Endothelial cell of umbilical vein (primary cell): ENCODE measurements at regions of chr11 and their contacts with region 1.

Region 1: GRCh38 chr11:76152086-76152681 is 54.1 kb downstream of the WNT11 start:
- DNase-seq: peak; percentile 77
- H3K4me3 ChIP-seq: peak overlapping the region in 2 of 3 experiments; percentile 25 to 27
- H3K27ac ChIP-seq: no peak overlapping the region
- H3K4me1 ChIP-seq: no peaks in the 10 kb centered on the region
- H3K27me3 ChIP-seq: no peaks in the 10 kb centered on the region
- CTCF ChIP-seq: peak; percentile 95 to 99
- POLR2A ChIP-seq: no peak

Region 2: GRCh38 chr11:75562048-75562835 is 589.9 kb before region 1 on chr11 and contains the start of gene SERPINH1:
- CTCF ChIA-PET with region 1: no interaction called
- POLR2A ChIA-PET with region 1: no interaction called
- dilution Hi-C with region 1: no loop called
- intact Hi-C with region 1: no loop called
- DNase-seq: peak; percentile 71
- H3K4me3 ChIP-seq: peak within 1 kb of the TSS; percentile 50 to 84 (median 66)
- H3K27ac ChIP-seq: peak within 1 kb of the TSS; percentile 92
- H3K4me1 ChIP-seq: peaks cover 54% of the 10 kb centered on the region
- H3K27me3 ChIP-seq: no peaks in the 10 kb centered on the region
- CTCF ChIP-seq: no peak
- POLR2A ChIP-seq: peak; percentile 86
- total RNA-seq, gene SERPINH1: 384 and 409 TPM in 2 replicates

Region 3: DNA sequence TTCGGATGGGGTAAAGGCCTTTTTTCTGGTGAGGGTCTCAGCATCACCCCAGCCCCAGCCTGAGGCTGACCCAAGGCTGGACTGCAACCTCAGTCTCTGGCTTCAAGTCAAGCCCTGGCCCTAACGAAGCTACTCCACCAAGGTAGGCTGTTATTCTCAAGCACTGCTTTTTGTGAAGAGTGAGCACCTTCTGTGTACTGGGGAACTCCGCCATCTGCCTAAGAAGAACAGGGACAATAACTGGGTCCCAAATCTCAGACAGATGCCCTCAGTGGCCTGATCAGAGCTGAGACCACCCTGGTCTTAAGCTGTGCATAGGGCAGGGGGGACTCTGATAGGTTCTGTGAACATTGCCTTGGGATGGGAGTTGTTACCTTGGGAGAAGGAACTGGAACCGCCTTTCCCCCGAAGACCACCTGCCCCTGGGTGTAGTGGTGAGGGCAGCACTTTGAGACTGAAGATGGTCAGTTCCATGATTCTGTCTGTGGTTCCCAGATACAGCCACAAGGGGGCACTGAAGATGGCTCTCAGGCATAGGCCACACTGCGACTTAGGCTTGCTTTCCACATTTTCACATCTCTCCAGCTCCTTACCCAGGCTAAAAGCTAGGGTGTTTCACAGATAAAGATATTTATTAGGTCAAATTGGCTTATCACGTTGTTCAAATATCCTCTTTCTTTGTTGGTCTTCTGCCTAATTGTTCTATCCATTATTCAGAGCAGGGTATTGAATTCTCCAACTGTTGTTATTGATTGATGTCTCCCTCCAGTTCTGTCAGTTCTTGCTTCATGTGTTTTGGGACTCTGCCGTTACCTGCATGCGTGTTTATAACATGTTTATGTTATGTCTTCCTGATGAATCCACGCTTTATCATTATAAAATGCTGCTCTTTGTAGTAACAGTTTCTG is 349.0 kb before region 1 on chr11:
- CTCF ChIA-PET with region 1: interaction called, 43 read pairs
- POLR2A ChIA-PET with region 1: no interaction called
- dilution Hi-C with region 1: no loop called
- intact Hi-C with region 1: loop called (anchors 1 kb)
- DNase-seq: peak; percentile 84
- H3K4me3 ChIP-seq: no peak overlapping the region
- H3K27ac ChIP-seq: no peak overlapping the region
- H3K4me1 ChIP-seq: no peaks in the 10 kb centered on the region
- H3K27me3 ChIP-seq: no peaks in the 10 kb centered on the region
- CTCF ChIP-seq: peak; percentile 87 to 90
- POLR2A ChIP-seq: no peak

Region 4: DNA sequence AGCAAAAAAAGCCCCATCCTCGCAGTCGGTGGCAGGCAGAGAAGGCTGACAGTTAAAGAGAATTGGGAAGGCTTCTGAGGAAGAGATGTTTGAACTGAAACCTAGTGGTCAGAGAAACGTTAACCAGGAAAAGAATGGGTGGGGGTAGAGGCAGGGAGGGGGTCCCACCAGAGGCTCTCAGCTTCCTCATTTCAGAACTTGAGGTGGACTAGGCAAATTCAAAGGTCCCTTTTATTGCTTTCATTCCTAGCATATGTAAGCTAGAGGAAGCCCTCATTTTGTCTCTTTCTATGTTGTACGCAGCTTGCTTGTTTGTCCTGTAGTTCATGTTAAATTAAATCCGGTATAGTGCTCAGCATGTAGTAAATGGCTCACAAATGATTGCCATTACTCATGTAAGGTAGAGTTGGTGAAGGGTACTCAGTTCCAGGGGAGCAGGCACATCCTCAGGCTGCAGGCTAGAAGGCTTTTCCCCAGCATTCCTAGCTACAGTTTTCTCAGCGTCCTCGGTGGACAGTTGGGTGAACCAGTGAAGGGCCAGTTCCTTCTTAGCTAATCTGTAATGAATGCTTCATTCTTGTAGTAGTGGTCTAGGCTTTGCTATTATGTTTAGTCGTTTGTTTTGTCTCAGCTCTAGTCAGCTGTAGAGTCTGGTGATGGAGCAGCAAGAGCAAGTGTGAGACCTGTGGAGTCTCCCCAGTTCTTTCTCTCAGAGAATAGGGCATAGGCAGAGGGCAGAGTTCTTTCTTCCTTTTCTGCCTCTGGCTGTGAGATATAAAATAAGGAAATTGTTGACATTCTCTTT is 278.6 kb before region 1 on chr11:
- CTCF ChIA-PET with region 1: interaction called, 20 read pairs
- POLR2A ChIA-PET with region 1: no interaction called
- dilution Hi-C with region 1: no loop called
- intact Hi-C with region 1: no loop called
- DNase-seq: peak; percentile 19
- H3K4me3 ChIP-seq: no peak overlapping the region
- H3K27ac ChIP-seq: no peak overlapping the region
- H3K4me1 ChIP-seq: peaks cover 12% of the 10 kb centered on the region
- H3K27me3 ChIP-seq: no peaks in the 10 kb centered on the region
- CTCF ChIP-seq: no peak
- POLR2A ChIP-seq: no peak

Region 5: GRCh38 chr11:75946531-75947530 is 205.4 kb before region 1 on chr11:
- CTCF ChIA-PET with region 1: interaction called, 11 read pairs
- POLR2A ChIA-PET with region 1: no interaction called
- dilution Hi-C with region 1: no loop called
- intact Hi-C with region 1: no loop called
- DNase-seq: peak; percentile 22
- H3K4me3 ChIP-seq: no peak overlapping the region
- H3K27ac ChIP-seq: peak overlapping the region; percentile 16
- H3K4me1 ChIP-seq: peaks cover 18% of the 10 kb centered on the region
- H3K27me3 ChIP-seq: no peaks in the 10 kb centered on the region
- CTCF ChIP-seq: no peak
- POLR2A ChIP-seq: no peak

Region 6: DNA sequence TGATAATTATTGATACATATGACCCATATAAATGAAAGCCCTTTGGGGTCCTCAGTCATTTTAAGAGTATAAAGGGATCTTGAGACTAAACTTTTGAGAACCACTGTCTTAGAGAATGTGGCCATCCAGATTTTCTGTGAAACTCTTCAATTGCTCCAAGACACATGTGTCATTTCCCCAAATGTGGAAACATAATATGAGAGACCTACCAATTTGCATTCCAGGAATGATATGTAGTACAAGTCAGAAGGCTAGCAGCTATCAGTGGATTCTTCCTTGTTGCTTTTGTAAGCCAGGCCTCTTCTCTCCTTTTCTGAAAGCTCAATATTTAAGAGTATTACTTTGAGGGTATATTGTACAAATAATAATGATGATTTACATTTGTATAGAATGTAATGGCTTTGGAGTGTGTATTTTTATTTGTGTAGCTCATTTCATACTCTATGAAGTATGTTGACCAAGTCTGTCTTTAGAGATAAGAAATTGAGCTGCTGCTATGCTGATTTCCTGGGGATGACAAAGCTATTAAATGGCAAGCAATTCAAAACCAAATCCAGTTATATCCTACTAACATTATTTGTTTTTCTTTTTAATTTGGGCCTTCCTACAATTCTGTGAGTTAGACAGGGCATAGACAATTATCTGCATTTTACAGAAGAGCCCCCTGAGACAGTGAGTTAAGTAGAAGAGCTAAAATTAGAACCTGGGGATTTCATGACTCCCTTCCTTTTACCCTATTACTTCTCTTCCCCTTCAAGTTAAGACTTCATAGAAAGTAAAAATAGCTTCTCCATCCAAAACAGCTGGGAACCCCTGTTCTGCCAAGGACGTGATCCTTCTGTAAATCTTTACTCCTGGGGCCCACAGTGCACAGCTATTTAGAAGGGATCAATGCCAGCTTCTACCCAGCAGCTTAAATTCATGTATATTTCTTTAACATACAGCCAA is 77.8 kb before region 1 on chr11:
- CTCF ChIA-PET with region 1: interaction called, 19 read pairs
- POLR2A ChIA-PET with region 1: no interaction called
- dilution Hi-C with region 1: no loop called
- intact Hi-C with region 1: no loop called
- DNase-seq: peak; percentile 75
- H3K4me3 ChIP-seq: no peak overlapping the region
- H3K27ac ChIP-seq: peak overlapping the region; percentile 44
- H3K4me1 ChIP-seq: peaks cover 35% of the 10 kb centered on the region
- H3K27me3 ChIP-seq: no peaks in the 10 kb centered on the region
- CTCF ChIP-seq: no peak
- POLR2A ChIP-seq: no peak

Region 7: DNA sequence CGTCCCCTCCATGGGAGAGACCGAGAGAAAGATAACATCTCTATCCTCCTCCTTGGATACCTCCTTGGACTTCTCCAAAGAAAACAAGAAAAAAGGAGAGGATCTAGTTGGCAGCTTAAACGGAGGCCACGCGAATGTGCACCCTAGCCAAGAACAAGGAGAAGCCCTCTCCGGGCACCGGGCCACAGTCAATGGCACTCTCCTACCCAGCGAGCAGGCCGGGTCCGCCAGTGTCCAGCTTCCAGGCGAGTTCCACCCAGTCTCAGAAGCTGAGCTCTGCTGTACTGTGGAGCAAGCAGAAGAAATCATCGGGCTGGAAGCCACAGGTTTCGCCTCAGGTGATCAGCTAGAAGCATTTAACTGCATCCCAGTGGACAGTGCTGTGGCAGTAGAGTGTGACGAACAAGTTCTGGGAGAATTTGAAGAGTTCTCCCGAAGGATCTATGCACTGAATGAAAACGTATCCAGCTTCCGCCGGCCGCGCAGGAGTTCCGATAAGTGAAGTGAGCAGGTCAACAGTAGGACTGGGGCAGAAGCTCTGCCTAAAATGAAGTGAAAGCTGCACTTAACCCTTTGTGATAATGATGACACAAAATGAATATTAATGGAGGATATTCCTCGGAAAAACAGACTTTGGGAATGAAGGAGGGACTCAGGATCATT is 11.1 kb before region 1 on chr11:
- CTCF ChIA-PET with region 1: interaction called, 21 read pairs
- POLR2A ChIA-PET with region 1: no interaction called
- dilution Hi-C with region 1: no loop called
- intact Hi-C with region 1: no loop called
- DNase-seq: no peak
- H3K4me3 ChIP-seq: no peak overlapping the region
- H3K27ac ChIP-seq: no peak overlapping the region
- H3K4me1 ChIP-seq: no peaks in the 10 kb centered on the region
- H3K27me3 ChIP-seq: no peaks in the 10 kb centered on the region
- CTCF ChIP-seq: no peak
- POLR2A ChIP-seq: no peak